GM13976 (cell line): ENCODE measurements at regions of chr12 and their contacts with region 1.

Region 1: GRCh38 chr12:14167005-14167628 is 185.7 kb upstream of the GRIN2B start:
- DNase-seq: peak; percentile 69
- CTCF ChIP-seq: peak; percentile 87

Region 2: GRCh38 chr12:13390381-13390861 is 776.7 kb before region 1 on chr12:
- in situ Hi-C with region 1: no loop called
- DNase-seq: no peak
- CTCF ChIP-seq: no peak

Region 3: GRCh38 chr12:13851828-13852227 is 315.3 kb before region 1 on chr12:
- in situ Hi-C with region 1: loop called (anchors 10 kb)
- DNase-seq: no peak
- CTCF ChIP-seq: no peak

Region 4: GRCh38 chr12:13962699-13963098 is 204.4 kb before region 1 on chr12:
- in situ Hi-C with region 1: loop called (anchors 10 kb)
- DNase-seq: no peak
- CTCF ChIP-seq: peak; percentile 22

Region 5: GRCh38 chr12:14111230-14111865 is 55.8 kb before region 1 on chr12:
- in situ Hi-C with region 1: loop called (anchors 10 kb)
- DNase-seq: peak; percentile 42
- CTCF ChIP-seq: peak; percentile 70

Region 6: GRCh38 chr12:14540801-14541462 is 373.8 kb after region 1 on chr12:
- in situ Hi-C with region 1: no loop called
- DNase-seq: no peak
- CTCF ChIP-seq: no peak